ENCODE measurements at regions of chr3 and their contacts with region 1.

Region 1: DNA sequence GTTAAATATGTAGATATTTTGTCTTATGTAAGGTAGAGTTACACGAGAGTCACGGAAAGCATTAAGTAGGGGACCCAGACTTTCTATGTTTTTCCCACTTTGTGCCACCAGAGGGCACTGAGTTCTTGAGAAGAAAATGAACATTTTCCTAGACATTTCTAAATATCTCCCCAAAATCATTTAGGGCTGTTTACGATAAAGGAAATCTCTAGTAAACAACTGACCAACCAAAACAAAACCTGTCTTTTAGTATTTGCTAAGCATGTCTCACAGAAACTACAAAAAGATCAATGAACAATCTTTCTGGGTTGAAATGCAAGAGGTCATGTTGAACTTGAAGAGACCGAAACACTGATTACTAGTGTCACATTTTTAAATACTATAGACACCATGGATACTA is 16.1 kb downstream of the POU1F1 start:
- DNase-seq: peak; percentile 28 to 74
- ATAC-seq: peak in 1 of 2 experiments; percentile 70; a peak in 3 of 6 replicates
- H3K4me3 ChIP-seq: no peak overlapping the region
- H3K27ac ChIP-seq: peak overlapping the region; percentile 42 to 65; a peak in 5 of 6 replicates
- H3K4me1 ChIP-seq: peaks cover 43% of the 10 kb centered on the region
- CTCF ChIP-seq: peak; percentile 78
- EP300 ChIP-seq: no peak
- POLR2A ChIP-seq: no peak
- RAD21 ChIP-seq: peak; percentile 78 to 80

Region 2: GRCh38 chr3:87207460-87207859 is 52.8 kb before region 1 on chr3:
- CTCF ChIA-PET with region 1: interaction called, 12 read pairs
- POLR2A ChIA-PET with region 1: no interaction called
- DNase-seq: peak; percentile 19 to 72
- ATAC-seq: peak; percentile 42 to 73; a peak in 3 of 6 replicates
- H3K4me3 ChIP-seq: no peak overlapping the region
- H3K27ac ChIP-seq: peak overlapping the region; percentile 82 to 83
- H3K4me1 ChIP-seq: peaks cover 58% of the 10 kb centered on the region
- CTCF ChIP-seq: no peak
- EP300 ChIP-seq: peak; percentile 62 to 68; a peak in 2 of 5 replicates
- POLR2A ChIP-seq: no peak
- RAD21 ChIP-seq: peak in 1 of 2 experiments; percentile 10; a peak in 2 of 5 replicates

Region 3: DNA sequence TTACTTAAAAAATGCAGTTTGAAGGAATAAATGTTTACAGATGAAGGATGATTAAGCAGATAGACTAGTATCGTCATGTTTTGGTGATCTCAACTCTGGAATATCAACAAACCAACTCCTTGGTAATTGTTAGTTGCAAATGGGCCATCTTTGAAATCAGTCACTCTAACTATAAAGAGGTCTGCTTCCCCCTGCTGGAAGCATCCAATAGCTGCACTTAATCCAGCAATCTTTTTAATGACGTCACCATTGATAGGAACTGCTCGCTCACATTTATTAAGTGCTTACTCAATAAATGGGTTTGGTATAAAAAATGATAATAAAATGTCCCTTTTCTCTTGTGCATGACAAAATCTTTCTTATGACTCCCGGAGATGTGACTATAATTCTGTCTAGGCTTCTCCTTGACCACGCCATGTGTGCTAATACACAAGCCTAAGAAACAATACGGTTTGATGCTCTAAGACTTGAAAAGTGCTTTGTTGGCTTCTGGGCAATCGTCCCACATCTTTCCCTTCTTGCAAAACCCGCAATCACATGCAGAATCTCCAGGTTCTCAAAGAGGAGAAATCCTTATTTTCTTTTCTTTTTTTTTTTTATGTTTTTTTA is 243.7 kb after region 1 on chr3:
- CTCF ChIA-PET with region 1: interaction called, 23 read pairs
- POLR2A ChIA-PET with region 1: no interaction called
- DNase-seq: peak; percentile 68 to 86
- ATAC-seq: peak; percentile 67 to 73; a peak in 5 of 6 replicates
- H3K4me3 ChIP-seq: no peak overlapping the region
- H3K27ac ChIP-seq: peak overlapping the region; percentile 6 to 9; a peak in 1 of 6 replicates
- H3K4me1 ChIP-seq: peaks cover 28% of the 10 kb centered on the region; the same call in 2 of the 3 replicates
- CTCF ChIP-seq: peak; percentile 73
- EP300 ChIP-seq: no peak
- POLR2A ChIP-seq: no peak
- RAD21 ChIP-seq: peak; percentile 83 to 91

Region 4: GRCh38 chr3:88003115-88003755 is 743.0 kb after region 1 on chr3:
- CTCF ChIA-PET with region 1: interaction called, 29 read pairs
- POLR2A ChIA-PET with region 1: no interaction called
- DNase-seq: peak; percentile 25 to 63
- ATAC-seq: peak in 1 of 2 experiments; percentile 56; a peak in 1 of 6 replicates
- H3K4me3 ChIP-seq: no peak overlapping the region
- H3K27ac ChIP-seq: no peak overlapping the region
- H3K4me1 ChIP-seq: 0 out of 3 replicates have a peak, but pooled peaks cover 4% of the 10 kb centered on the region
- CTCF ChIP-seq: peak; percentile 88
- EP300 ChIP-seq: no peak
- POLR2A ChIP-seq: no peak
- RAD21 ChIP-seq: peak; percentile 91 to 93